ENCODE measurements at regions of chr1 and their contacts with region 1.

Region 1: DNA sequence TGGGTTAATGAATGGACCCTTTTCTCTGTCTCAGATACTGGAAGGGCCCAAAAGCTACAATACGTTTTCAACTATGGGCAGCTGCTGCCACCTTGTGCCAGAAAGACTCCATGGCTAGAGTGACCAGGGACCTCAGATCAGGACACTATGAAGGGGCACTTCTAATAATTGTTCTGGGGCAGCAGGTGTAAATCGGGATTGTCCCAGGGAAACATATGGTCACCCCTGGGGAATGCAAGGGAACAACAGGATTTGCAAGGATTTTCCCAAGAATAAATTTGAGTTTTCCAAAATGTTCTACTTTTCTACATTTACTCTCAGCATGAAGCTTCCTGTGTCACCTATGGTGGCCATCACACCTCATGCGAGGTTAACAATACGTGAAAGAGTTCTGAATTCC is 12.0 kb upstream of the FCAMR start:
- DNase-seq: peak; percentile 78
- H3K4me3 Mint-ChIP-seq: no peak overlapping the region
- H3K27ac Mint-ChIP-seq: no peak overlapping the region
- H3K4me1 Mint-ChIP-seq: no peaks in the 10 kb centered on the region
- H3K27me3 Mint-ChIP-seq: peaks cover 60% of the 10 kb centered on the region

Region 2: DNA sequence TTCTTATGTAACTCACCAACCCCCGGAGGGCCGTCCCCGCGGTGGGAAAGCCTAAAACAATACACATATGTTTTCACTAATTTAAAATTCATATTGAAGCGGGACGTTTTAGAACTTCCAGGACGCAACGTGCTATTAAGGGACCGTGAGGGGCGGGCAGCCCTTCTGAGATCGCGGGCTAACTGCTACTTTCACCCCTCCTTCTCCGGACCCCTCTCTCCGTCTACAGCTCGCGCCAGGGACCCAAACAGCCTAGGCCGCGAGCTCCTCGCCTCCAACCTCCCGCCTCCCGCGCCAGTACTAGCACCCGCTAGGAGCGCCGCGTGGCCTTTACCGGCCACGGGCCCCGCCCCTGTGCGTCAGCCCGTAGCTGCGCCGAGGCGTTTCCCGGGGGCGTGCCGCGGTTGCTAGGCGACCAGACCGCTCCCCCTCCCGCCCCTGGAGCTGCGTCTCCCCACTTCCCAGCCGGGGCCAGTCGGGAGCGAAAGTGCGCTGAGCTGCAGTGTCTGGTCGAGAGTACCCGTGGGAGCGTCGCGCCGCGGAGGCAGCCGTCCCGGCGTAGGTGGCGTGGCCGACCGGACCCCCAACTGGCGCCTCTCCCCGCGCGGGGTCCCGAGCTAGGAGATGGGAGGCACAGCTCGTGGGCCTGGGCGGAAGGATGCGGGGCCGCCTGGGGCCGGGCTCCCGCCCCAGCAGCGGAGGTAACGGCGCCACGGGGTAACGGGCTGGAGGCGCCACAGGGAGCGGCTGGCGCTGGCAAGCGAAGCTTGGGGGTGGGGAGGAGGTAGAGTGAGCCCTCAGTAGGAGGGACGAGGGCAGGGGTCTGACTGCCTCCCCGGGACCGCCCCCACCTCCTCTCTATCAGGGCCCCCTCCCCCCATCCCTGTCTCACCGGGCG is 346.9 kb before region 1 on chr1 and contains the start of gene DYRK3:
- CTCF ChIA-PET with region 1: interaction called, 23 read pairs
- DNase-seq: peak; percentile 96
- H3K4me3 Mint-ChIP-seq: peak within 1 kb of the TSS; percentile 77
- H3K27ac Mint-ChIP-seq: peak within 1 kb of the TSS; percentile 85
- H3K4me1 Mint-ChIP-seq: peaks cover 26% of the 10 kb centered on the region
- H3K27me3 Mint-ChIP-seq: peaks cover 38% of the 10 kb centered on the region

Region 3: GRCh38 chr1:206734499-206735142 is 247.6 kb before region 1 on chr1:
- CTCF ChIA-PET with region 1: interaction called, 59 read pairs
- DNase-seq: peak; percentile 87
- H3K4me3 Mint-ChIP-seq: no peak overlapping the region
- H3K27ac Mint-ChIP-seq: peak overlapping the region; percentile 14
- H3K4me1 Mint-ChIP-seq: peaks cover 61% of the 10 kb centered on the region
- H3K27me3 Mint-ChIP-seq: peaks cover 8% of the 10 kb centered on the region

Region 4: GRCh38 chr1:206935491-206936067 is 46.6 kb before region 1 on chr1:
- CTCF ChIA-PET with region 1: interaction called, 265 read pairs
- DNase-seq: peak; percentile 74
- H3K4me3 Mint-ChIP-seq: no peak overlapping the region
- H3K27ac Mint-ChIP-seq: no peak overlapping the region
- H3K4me1 Mint-ChIP-seq: peaks cover 14% of the 10 kb centered on the region
- H3K27me3 Mint-ChIP-seq: peaks cover 35% of the 10 kb centered on the region

Region 5: GRCh38 chr1:207004981-207005830 is 23.0 kb after region 1 on chr1:
- CTCF ChIA-PET with region 1: interaction called, 19 read pairs
- DNase-seq: peak; percentile 62
- H3K4me3 Mint-ChIP-seq: no peak overlapping the region
- H3K27ac Mint-ChIP-seq: no peak overlapping the region
- H3K4me1 Mint-ChIP-seq: no peaks in the 10 kb centered on the region
- H3K27me3 Mint-ChIP-seq: peaks cover 65% of the 10 kb centered on the region

Measured in activated naive CD4-positive, alpha-beta T cell treated with anti-CD3 and anti-CD28 coated beads, Interleukin-2, amount 10 ng/mL, durations not matched to agents 7 days and 5 days (primary cell).